ENCODE measurements at regions of chr5 and their contacts with region 1.

Region 1: GRCh38 chr5:65925601-65926275 is 637 bp upstream of the ERBIN start:
- DNase-seq: peak; percentile 82
- H3K4me3 Mint-ChIP-seq: peak overlapping the region; percentile 81
- H3K27ac Mint-ChIP-seq: peak overlapping the region; percentile 92
- H3K4me1 Mint-ChIP-seq: peaks cover 24% of the 10 kb centered on the region
- H3K27me3 Mint-ChIP-seq: no peaks in the 10 kb centered on the region
- CTCF ChIP-seq: peak; percentile 22

Region 2: GRCh38 chr5:65624571-65625555 is 300.9 kb before region 1 on chr5 and contains the starts of genes SHLD3 and TRAPPC13:
- CTCF ChIA-PET with region 1: interaction called, 3 read pairs
- POLR2A ChIA-PET with region 1: interaction called, 13 read pairs
- intact Hi-C with region 1: no loop called
- DNase-seq: peak; percentile 89
- H3K4me3 Mint-ChIP-seq: peak within 1 kb of the TSS; percentile 85
- H3K27ac Mint-ChIP-seq: peak within 1 kb of the TSS; percentile 97
- H3K4me1 Mint-ChIP-seq: peaks cover 7% of the 10 kb centered on the region
- H3K27me3 Mint-ChIP-seq: no peaks in the 10 kb centered on the region
- CTCF ChIP-seq: no peak
- total RNA-seq, gene SHLD3: 3.0 and 3.7 TPM in 2 replicates
- total RNA-seq, gene TRAPPC13: 28.4 and 39.9 TPM in 2 replicates

Region 3: DNA sequence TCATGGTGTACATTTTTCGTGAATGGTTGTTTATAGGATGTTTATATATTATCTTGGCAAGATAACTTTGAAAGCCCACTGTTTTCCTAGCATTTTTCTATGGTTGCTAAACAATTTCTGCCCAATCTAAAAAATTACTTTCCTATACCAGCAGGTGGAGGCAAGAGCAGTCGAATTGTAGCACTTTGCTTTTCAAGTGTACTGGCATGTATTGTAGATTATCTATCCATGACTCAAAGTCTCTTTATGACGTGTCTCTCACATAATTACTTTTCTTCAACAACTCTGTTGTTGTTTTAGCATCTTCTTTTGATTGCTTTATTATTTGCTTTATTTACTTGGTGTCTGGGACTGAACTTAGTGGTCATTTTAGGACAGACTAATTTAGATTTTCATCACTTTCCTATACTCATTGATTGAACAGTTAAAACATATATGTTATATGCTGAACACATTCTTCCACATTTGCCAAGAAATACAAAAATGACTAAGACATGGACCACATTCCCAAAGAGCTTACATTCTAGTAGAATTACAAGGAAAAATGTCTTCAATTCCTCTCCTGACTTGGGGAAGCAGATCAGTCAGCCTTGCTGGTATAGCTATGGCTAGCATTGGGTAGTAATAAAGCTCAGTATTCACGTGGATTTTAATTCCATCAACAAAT is 183.0 kb before region 1 on chr5:
- CTCF ChIA-PET with region 1: no interaction called
- POLR2A ChIA-PET with region 1: interaction called, 34 read pairs
- intact Hi-C with region 1: loop called (anchors 2 kb)
- DNase-seq: peak; percentile 72
- H3K4me3 Mint-ChIP-seq: no peak overlapping the region
- H3K27ac Mint-ChIP-seq: no peak overlapping the region
- H3K4me1 Mint-ChIP-seq: peaks cover 18% of the 10 kb centered on the region
- H3K27me3 Mint-ChIP-seq: no peaks in the 10 kb centered on the region
- CTCF ChIP-seq: peak; percentile 65

Region 4: GRCh38 chr5:65811004-65811403 is 114.7 kb before region 1 on chr5:
- CTCF ChIA-PET with region 1: interaction called, 5 read pairs
- POLR2A ChIA-PET with region 1: interaction called, 23 read pairs
- intact Hi-C with region 1: no loop called
- DNase-seq: peak; percentile 75
- H3K4me3 Mint-ChIP-seq: no peak overlapping the region
- H3K27ac Mint-ChIP-seq: peak overlapping the region; percentile 25
- H3K4me1 Mint-ChIP-seq: peaks cover 9% of the 10 kb centered on the region
- H3K27me3 Mint-ChIP-seq: no peaks in the 10 kb centered on the region
- CTCF ChIP-seq: no peak

Region 5: GRCh38 chr5:66010476-66010875 is 84.7 kb after region 1 on chr5:
- CTCF ChIA-PET with region 1: no interaction called
- POLR2A ChIA-PET with region 1: no interaction called
- intact Hi-C with region 1: loop called (anchors 5 kb)
- DNase-seq: no peak
- H3K4me3 Mint-ChIP-seq: no peak overlapping the region
- H3K27ac Mint-ChIP-seq: no peak overlapping the region
- H3K4me1 Mint-ChIP-seq: peaks cover 6% of the 10 kb centered on the region
- H3K27me3 Mint-ChIP-seq: no peaks in the 10 kb centered on the region
- CTCF ChIP-seq: no peak

Measured in MCF 10A (cell line).